Activated CD4-positive, alpha-beta memory T cell treated with anti-CD3 and anti-CD28 coated beads for 36 hours (primary cell): ENCODE measurements at regions of chr2 and their contacts with region 1.

Region 1: GRCh38 chr2:181953881-181954537 is 31.6 kb upstream of the PPP1R1C start:
- DNase-seq: peak; percentile 73
- H3K4me3 Mint-ChIP-seq: peak overlapping the region; percentile 9
- H3K27ac Mint-ChIP-seq: no peak overlapping the region
- H3K4me1 Mint-ChIP-seq: peaks cover 5% of the 10 kb centered on the region
- H3K27me3 Mint-ChIP-seq: peaks cover 26% of the 10 kb centered on the region

Region 2: GRCh38 chr2:181077128-181077709 is 876.8 kb before region 1 on chr2:
- CTCF ChIA-PET with region 1: no interaction called
- POLR2A ChIA-PET with region 1: no interaction called
- intact Hi-C with region 1: loop called (anchors 5 kb)
- DNase-seq: no peak
- H3K4me3 Mint-ChIP-seq: no peak overlapping the region
- H3K27ac Mint-ChIP-seq: no peak overlapping the region
- H3K4me1 Mint-ChIP-seq: peaks cover 7% of the 10 kb centered on the region
- H3K27me3 Mint-ChIP-seq: no peaks in the 10 kb centered on the region

Region 3: GRCh38 chr2:181742922-181743722 is 210.9 kb before region 1 on chr2:
- CTCF ChIA-PET with region 1: interaction called, 20 read pairs
- POLR2A ChIA-PET with region 1: no interaction called
- intact Hi-C with region 1: loop called (anchors 1 kb)
- DNase-seq: peak; percentile 35
- H3K4me3 Mint-ChIP-seq: no peak overlapping the region
- H3K27ac Mint-ChIP-seq: no peak overlapping the region
- H3K4me1 Mint-ChIP-seq: peaks cover 4% of the 10 kb centered on the region
- H3K27me3 Mint-ChIP-seq: peaks cover 13% of the 10 kb centered on the region

Region 4: DNA sequence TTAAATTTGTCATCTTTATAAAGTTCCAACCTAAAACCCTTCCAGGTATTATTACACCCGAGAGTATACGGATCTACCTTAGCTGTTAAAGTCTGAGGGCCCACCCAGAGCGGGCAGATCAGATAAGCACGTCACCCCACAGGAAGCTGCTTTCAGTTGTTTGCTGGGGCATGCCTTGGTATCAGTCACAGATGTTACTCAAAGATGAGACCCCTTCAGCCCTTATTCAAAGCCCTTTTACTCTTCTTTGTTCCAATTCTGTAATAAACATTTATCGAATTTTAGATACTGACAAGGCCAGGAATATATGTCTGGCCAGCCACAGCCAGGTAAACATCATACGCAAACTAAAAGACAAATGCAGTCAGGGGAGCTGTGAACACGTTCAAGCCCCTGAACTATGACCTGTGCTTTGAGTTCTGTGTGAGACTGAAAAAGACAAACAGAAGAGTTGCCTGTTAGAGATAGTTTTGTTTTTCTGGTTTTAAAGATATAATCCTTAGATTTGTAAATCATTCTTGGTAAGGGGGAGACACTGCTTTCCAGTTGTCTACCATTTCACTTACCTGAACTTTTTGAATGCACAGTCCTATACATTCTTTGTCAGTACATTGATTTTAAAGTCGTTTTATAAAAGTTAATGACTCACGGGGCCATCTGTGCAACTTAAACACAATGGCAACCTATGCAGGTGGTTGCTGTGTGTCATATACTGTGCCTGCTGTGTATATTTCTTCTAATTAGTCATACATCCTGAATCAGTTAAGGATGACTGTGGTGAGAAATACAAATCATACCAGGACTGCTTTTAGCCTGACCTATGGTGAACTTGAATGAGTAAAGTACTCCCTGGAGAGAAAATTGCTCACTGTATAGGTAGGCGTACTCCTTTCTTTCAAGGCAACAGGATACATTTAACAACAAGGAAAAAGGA is 163.0 kb before region 1 on chr2:
- CTCF ChIA-PET with region 1: no interaction called
- POLR2A ChIA-PET with region 1: no interaction called
- intact Hi-C with region 1: loop called (anchors 2 kb)
- DNase-seq: peak; percentile 52
- H3K4me3 Mint-ChIP-seq: no peak overlapping the region
- H3K27ac Mint-ChIP-seq: peak overlapping the region; percentile 46
- H3K4me1 Mint-ChIP-seq: peaks cover 19% of the 10 kb centered on the region
- H3K27me3 Mint-ChIP-seq: peaks cover 12% of the 10 kb centered on the region

Region 5: GRCh38 chr2:181848261-181848886 is 105.6 kb before region 1 on chr2:
- CTCF ChIA-PET with region 1: no interaction called
- POLR2A ChIA-PET with region 1: no interaction called
- intact Hi-C with region 1: no loop called
- DNase-seq: no peak
- H3K4me3 Mint-ChIP-seq: no peak overlapping the region
- H3K27ac Mint-ChIP-seq: no peak overlapping the region
- H3K4me1 Mint-ChIP-seq: no peaks in the 10 kb centered on the region
- H3K27me3 Mint-ChIP-seq: peaks cover 5% of the 10 kb centered on the region

Region 6: GRCh38 chr2:181891966-181892798 is 61.8 kb before region 1 on chr2:
- CTCF ChIA-PET with region 1: interaction called, 13 read pairs
- POLR2A ChIA-PET with region 1: no interaction called
- intact Hi-C with region 1: loop called (anchors 5 kb)
- DNase-seq: peak; percentile 68
- H3K4me3 Mint-ChIP-seq: peak overlapping the region; percentile 96
- H3K27ac Mint-ChIP-seq: peak overlapping the region; percentile 77
- H3K4me1 Mint-ChIP-seq: peaks cover 23% of the 10 kb centered on the region
- H3K27me3 Mint-ChIP-seq: peaks cover 7% of the 10 kb centered on the region

Region 7: GRCh38 chr2:181970160-181970794 is 16.3 kb after region 1 on chr2:
- CTCF ChIA-PET with region 1: interaction called, 14 read pairs
- POLR2A ChIA-PET with region 1: no interaction called
- intact Hi-C with region 1: no loop called
- DNase-seq: no peak
- H3K4me3 Mint-ChIP-seq: no peak overlapping the region
- H3K27ac Mint-ChIP-seq: no peak overlapping the region
- H3K4me1 Mint-ChIP-seq: no peaks in the 10 kb centered on the region
- H3K27me3 Mint-ChIP-seq: peaks cover 20% of the 10 kb centered on the region

Region 8: GRCh38 chr2:181984814-181985631 is 31.0 kb after region 1 on chr2:
- CTCF ChIA-PET with region 1: no interaction called
- POLR2A ChIA-PET with region 1: no interaction called
- intact Hi-C with region 1: no loop called
- DNase-seq: no peak
- H3K4me3 Mint-ChIP-seq: no peak overlapping the region
- H3K27ac Mint-ChIP-seq: no peak overlapping the region
- H3K4me1 Mint-ChIP-seq: no peaks in the 10 kb centered on the region
- H3K27me3 Mint-ChIP-seq: no peaks in the 10 kb centered on the region

Region 9: GRCh38 chr2:182077451-182078142 is 123.6 kb after region 1 on chr2:
- CTCF ChIA-PET with region 1: interaction called, 3 read pairs
- POLR2A ChIA-PET with region 1: no interaction called
- intact Hi-C with region 1: loop called (anchors 5 kb)
- DNase-seq: no peak
- H3K4me3 Mint-ChIP-seq: no peak overlapping the region
- H3K27ac Mint-ChIP-seq: no peak overlapping the region
- H3K4me1 Mint-ChIP-seq: no peaks in the 10 kb centered on the region
- H3K27me3 Mint-ChIP-seq: peaks cover 4% of the 10 kb centered on the region

Region 10: GRCh38 chr2:182132605-182133004 is 178.6 kb after region 1 on chr2:
- CTCF ChIA-PET with region 1: no interaction called
- POLR2A ChIA-PET with region 1: no interaction called
- intact Hi-C with region 1: no loop called
- DNase-seq: no peak
- H3K4me3 Mint-ChIP-seq: no peak overlapping the region
- H3K27ac Mint-ChIP-seq: no peak overlapping the region
- H3K4me1 Mint-ChIP-seq: no peaks in the 10 kb centered on the region
- H3K27me3 Mint-ChIP-seq: peaks cover 5% of the 10 kb centered on the region

Region 11: GRCh38 chr2:182381225-182381624 is 427.2 kb after region 1 on chr2:
- CTCF ChIA-PET with region 1: no interaction called
- POLR2A ChIA-PET with region 1: no interaction called
- intact Hi-C with region 1: no loop called
- DNase-seq: no peak
- H3K4me3 Mint-ChIP-seq: no peak overlapping the region
- H3K27ac Mint-ChIP-seq: no peak overlapping the region
- H3K4me1 Mint-ChIP-seq: no peaks in the 10 kb centered on the region
- H3K27me3 Mint-ChIP-seq: no peaks in the 10 kb centered on the region